PC-3 (cell line): ENCODE measurements at regions of chr5 and their contacts with region 1.

Region 1: GRCh38 chr5:74717596-74717995 is 32.6 kb downstream of the HEXB start:
- DNase-seq: no peak
- ATAC-seq: no peak
- H3K4me3 ChIP-seq: no peak overlapping the region
- H3K27ac ChIP-seq: no peak overlapping the region
- H3K4me1 ChIP-seq: no peaks in the 10 kb centered on the region
- H3K27me3 ChIP-seq: no peaks in the 10 kb centered on the region
- CTCF ChIP-seq: no peak

Region 2: DNA sequence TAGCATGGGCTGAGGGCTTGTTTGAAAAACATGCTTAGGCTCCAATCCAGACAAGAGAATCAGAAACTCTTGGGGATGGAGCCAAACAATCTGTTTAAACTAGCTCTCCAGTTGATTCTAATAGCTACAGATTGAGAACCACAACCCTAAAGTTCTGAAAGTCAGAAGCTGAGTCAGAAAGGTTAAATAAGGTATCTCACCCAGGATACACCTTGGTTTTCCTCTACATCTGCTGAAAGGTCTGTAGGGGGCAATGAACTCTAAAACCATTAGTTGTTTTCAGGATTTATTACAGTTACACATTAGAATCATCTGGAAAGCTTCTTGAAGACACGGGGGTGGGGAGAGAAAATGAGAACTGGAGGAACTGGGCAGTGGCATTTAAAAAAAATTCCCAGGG is 43.6 kb after region 1 on chr5:
- CTCF ChIA-PET with region 1: interaction called, 13 read pairs
- POLR2A ChIA-PET with region 1: no interaction called
- intact Hi-C with region 1: no loop called
- DNase-seq: no peak
- ATAC-seq: no peak
- H3K4me3 ChIP-seq: no peak overlapping the region
- H3K27ac ChIP-seq: no peak overlapping the region
- H3K4me1 ChIP-seq: peaks cover 42% of the 10 kb centered on the region
- H3K27me3 ChIP-seq: no peaks in the 10 kb centered on the region
- CTCF ChIP-seq: no peak